Activated naive CD4-positive, alpha-beta T cell treated with anti-CD3 and anti-CD28 coated beads for 36 hours (primary cell): ENCODE measurements at regions of chr4 and their contacts with region 1.

Region 1: GRCh38 chr4:140116442-140117104 is 37.4 kb downstream of the MAML3 start:
- DNase-seq: peak; percentile 66
- H3K4me3 Mint-ChIP-seq: no peak overlapping the region
- H3K27ac Mint-ChIP-seq: peak overlapping the region; percentile 70
- H3K4me1 Mint-ChIP-seq: peaks cover 24% of the 10 kb centered on the region
- H3K27me3 Mint-ChIP-seq: no peaks in the 10 kb centered on the region

Region 2: DNA sequence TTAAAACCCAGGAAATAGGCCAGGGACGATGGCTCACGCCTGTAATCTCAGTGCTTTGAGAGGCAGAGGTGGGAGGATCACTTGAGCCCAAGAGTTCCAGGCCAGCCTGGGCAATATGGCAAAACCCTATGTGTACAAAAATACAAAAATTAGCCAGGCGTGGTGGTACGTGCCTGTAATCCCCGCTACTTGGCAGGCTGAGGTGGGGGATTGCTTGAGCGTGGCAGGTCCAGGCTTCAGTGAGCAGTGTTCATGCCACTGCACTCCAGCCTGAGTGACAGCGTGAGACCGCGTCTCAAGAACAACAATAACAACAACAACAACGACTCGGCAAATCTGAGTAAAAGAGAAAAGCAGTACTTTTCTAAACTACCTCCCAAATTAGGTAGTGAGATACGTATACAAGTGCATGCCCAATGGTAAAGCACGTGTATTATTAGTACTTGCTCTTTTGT is 801.3 kb before region 1 on chr4:
- CTCF ChIA-PET with region 1: no interaction called
- intact Hi-C with region 1: no loop called
- DNase-seq: no peak
- H3K4me3 Mint-ChIP-seq: no peak overlapping the region
- H3K27ac Mint-ChIP-seq: no peak overlapping the region
- H3K4me1 Mint-ChIP-seq: peaks cover 74% of the 10 kb centered on the region
- H3K27me3 Mint-ChIP-seq: no peaks in the 10 kb centered on the region

Region 3: GRCh38 chr4:140103676-140104075 is 12.9 kb before region 1 on chr4:
- CTCF ChIA-PET with region 1: no interaction called
- intact Hi-C with region 1: loop called (anchors 1 kb)
- DNase-seq: peak; percentile 64
- H3K4me3 Mint-ChIP-seq: no peak overlapping the region
- H3K27ac Mint-ChIP-seq: no peak overlapping the region
- H3K4me1 Mint-ChIP-seq: peaks cover 48% of the 10 kb centered on the region
- H3K27me3 Mint-ChIP-seq: peaks cover 2% of the 10 kb centered on the region

Region 4: DNA sequence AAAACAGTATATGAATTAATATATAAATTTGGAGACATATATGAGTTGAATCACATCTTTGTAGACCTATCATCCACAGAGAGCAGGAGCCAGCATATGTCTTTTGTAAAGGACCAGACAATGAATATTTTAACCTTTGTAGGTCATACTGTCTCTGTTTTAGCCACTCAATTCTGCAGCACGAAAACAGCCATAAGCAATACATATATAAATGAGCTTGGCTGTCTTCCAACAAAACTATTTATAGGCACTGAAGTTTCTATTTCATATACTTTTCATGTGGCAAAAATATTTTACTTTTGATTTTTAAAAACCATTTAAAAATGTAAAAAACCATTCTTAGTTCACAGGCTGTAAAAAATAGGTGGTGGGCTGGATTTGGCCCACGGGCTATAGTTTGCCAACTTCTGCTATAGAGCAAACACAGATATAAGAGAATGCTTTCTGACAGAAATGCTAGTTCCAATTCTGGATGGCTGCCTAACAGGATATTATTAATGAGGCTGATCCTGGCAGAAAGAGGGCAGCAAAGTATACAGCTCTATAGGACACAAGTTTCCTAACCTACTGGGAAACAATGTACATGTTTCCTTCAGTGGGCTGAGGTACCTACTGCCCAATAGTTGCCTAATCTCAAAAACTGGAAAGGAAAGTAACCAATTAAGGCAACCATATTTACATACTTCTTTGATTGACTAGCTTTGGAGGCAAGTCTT is 510.2 kb after region 1 on chr4:
- CTCF ChIA-PET with region 1: no interaction called
- intact Hi-C with region 1: no loop called
- DNase-seq: no peak
- H3K4me3 Mint-ChIP-seq: no peak overlapping the region
- H3K27ac Mint-ChIP-seq: no peak overlapping the region
- H3K4me1 Mint-ChIP-seq: no peaks in the 10 kb centered on the region
- H3K27me3 Mint-ChIP-seq: no peaks in the 10 kb centered on the region